K562 (cell line): ENCODE measurements at regions of chr15 and their contacts with region 1.

Region 1: GRCh38 chr15:78234515-78235040 is at the start of gene ACSBG1:
- DNase-seq: no peak
- ATAC-seq: no peak
- H3K4me3 ChIP-seq: no peak within 1 kb of the TSS
- H3K27ac ChIP-seq: no peak within 1 kb of the TSS
- H3K4me1 ChIP-seq: peaks cover 0 to 4% of the 10 kb centered on the region in 2 experiments; a peak in 1 of 5 replicates
- H3K27me3 ChIP-seq: peaks cover 17 to 50% of the 10 kb centered on the region in 2 experiments; a peak in 4 of 5 replicates
- CTCF ChIP-seq: no peak
- EP300 ChIP-seq: no peak
- POLR2A ChIP-seq: no peak
- RAD21 ChIP-seq: no peak
- polyA plus RNA-seq, gene ACSBG1: 0.36 to 0.75 TPM

Region 2: DNA sequence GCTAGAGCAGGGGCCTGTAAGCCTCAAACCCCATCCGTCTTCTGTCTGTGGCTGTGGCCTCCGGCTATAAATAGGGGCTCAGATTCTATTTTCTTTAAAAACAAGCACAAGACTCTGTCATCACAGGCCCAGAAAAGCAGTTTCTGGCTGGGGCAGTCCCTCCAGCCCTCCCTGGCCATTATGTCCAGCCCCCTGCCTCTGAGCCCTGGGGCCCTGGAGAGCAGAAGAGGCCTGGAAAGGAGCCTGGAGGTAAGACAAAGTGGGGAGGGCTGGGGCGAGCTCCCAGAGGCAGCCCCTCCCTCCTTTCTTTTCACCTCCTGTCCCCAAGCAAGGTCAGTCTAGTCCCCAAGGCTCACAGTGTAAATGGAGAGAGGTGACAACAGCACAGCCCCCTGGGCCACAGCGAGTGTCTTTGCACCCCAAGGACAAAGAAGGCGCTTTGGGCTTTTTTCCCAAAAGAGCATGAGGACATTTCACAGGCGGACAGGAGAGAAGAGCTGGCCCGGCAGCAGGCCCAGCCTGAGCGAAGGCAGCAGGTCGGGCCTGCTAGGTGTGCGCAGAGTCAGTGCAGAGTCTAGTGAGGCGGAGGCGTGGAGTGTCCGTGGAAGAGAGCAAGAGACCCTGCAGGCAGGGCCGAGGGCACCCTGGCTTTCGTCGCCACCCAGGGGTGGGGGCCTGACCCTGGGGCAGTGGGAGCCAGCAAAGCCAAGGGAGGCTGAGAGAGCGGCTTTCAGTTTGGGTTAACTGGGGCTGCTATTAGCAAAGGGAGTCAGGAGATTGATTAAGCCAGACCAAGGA is 345.4 kb before region 1 on chr15:
- CTCF ChIA-PET with region 1: no interaction called
- POLR2A ChIA-PET with region 1: no interaction called
- in situ Hi-C with region 1: no loop called
- intact Hi-C with region 1: no loop called
- DNase-seq: no peak
- ATAC-seq: no peak
- H3K4me3 ChIP-seq: no peak overlapping the region
- H3K27ac ChIP-seq: no peak overlapping the region
- H3K4me1 ChIP-seq: peaks cover 0 to 5% of the 10 kb centered on the region in 2 experiments; a peak in 2 of 5 replicates
- H3K27me3 ChIP-seq: peaks cover 0 to 24% of the 10 kb centered on the region in 2 experiments; a peak in 2 of 5 replicates
- CTCF ChIP-seq: no peak
- EP300 ChIP-seq: no peak
- POLR2A ChIP-seq: no peak
- RAD21 ChIP-seq: no peak

Region 3: DNA sequence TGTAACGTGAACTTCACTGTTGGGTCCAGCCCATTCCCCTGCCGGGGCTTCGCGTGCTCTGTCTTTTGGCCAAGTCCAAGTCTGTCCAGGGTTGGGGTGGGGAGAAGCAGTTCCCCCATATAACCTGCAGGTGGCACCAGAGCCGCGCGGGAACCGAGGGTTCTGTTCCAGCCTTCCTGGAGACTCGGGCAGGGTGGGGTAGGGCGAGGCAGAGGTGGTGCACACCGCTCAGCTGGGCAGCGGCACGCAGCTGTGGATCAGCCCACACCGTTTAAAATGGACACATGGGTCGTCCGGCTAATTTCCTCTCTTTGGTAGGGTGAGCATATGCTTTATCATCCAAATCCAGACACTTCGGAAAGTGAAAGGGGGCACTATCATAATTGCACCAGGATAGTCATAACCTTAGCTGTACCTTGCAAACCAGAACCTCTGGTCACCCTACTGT is 275.1 kb before region 1 on chr15:
- CTCF ChIA-PET with region 1: no interaction called
- POLR2A ChIA-PET with region 1: no interaction called
- in situ Hi-C with region 1: loop called (anchors 5 kb)
- intact Hi-C with region 1: no loop called
- DNase-seq: peak; percentile 84 to 90 (median 90)
- ATAC-seq: peak; percentile 100
- H3K4me3 ChIP-seq: no peak overlapping the region
- H3K27ac ChIP-seq: no peak overlapping the region
- H3K4me1 ChIP-seq: peaks cover 0 to 5% of the 10 kb centered on the region in 2 experiments; a peak in 3 of 5 replicates
- H3K27me3 ChIP-seq: peaks cover 5 to 13% of the 10 kb centered on the region in 2 experiments; a peak in 3 of 5 replicates
- CTCF ChIP-seq: peak; percentile 93 to 96 (median 95)
- EP300 ChIP-seq: no peak
- POLR2A ChIP-seq: no peak
- RAD21 ChIP-seq: peak; percentile 93 to 94

Region 4: GRCh38 chr15:78170848-78171773 is 63.5 kb before region 1 on chr15:
- CTCF ChIA-PET with region 1: no interaction called
- POLR2A ChIA-PET with region 1: no interaction called
- in situ Hi-C with region 1: no loop called
- intact Hi-C with region 1: no loop called
- DNase-seq: no peak
- ATAC-seq: no peak
- H3K4me3 ChIP-seq: no peak overlapping the region
- H3K27ac ChIP-seq: no peak overlapping the region
- H3K4me1 ChIP-seq: peaks cover 3 to 9% of the 10 kb centered on the region in 2 experiments; a peak in 3 of 5 replicates
- H3K27me3 ChIP-seq: no peaks in the 10 kb centered on the region
- CTCF ChIP-seq: no peak
- EP300 ChIP-seq: no peak
- POLR2A ChIP-seq: no peak
- RAD21 ChIP-seq: no peak